ENCODE measurements at regions of chr7 and their contacts with region 1.

Region 1: GRCh38 chr7:80197627-80198026 is 63.0 kb downstream of the GNAI1 start:
- DNase-seq: no peak

Region 2: DNA sequence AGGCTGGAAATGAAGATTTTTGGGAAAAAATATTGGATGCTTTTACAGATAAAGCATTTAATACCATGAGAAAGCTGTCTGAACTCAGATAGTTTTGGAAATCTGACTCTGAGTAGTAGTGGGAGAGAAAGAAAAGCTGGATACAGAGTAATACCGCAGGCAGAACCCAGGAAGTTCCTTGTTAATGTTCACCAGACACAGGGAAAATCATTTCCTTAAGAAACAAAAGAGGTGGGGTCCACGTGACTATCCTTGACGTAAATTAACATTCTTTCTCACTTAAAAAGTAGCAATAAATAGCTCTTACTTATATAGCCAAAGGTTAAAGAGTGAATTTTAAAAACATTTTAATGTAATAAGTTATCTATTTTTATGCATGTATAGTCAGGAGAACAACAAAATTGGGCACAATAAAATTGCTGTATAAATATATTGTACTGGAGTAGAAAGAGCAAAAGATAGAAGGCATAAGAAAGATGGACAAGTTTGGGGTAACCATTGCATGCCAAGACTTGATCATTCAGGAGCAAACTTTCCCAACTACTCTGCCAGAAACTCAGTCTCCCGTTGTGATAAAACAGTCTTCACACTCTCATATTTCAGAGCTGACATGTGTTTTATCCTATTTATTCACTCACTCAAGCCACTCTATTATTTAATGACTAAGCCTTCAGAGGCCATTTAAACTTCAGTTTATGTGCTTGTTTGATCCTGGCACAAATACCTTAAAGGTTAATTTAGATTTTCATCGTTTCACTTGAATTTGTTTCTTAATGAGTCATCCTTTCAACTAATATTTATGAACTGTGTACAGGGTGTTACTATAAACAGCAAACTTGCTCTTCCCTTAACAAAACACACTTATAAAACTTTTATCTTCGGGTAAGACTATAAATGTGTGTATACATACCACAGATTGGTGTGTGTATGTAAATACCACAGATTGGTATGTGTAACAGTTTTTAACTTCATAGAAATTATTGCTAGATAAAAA is 80.1 kb after region 1 on chr7:
- intact Hi-C with region 1: loop called (anchors 2 kb)
- DNase-seq: no peak

Measured in cardiac septum (tissue), 1 donor.